A673 (cell line): ENCODE measurements at regions of chr11 and their contacts with region 1.

Region 1: GRCh38 chr11:93689240-93689639 is 27.8 kb downstream of the CEP295 start:
- DNase-seq: no peak
- H3K4me3 ChIP-seq: no peak overlapping the region
- H3K27ac ChIP-seq: no peak overlapping the region
- H3K4me1 ChIP-seq: no peaks in the 10 kb centered on the region
- H3K27me3 ChIP-seq: no peaks in the 10 kb centered on the region
- CTCF ChIP-seq: no peak

Region 2: GRCh38 chr11:93719310-93719709 is 30.1 kb after region 1 on chr11:
- CTCF ChIA-PET with region 1: no interaction called
- POLR2A ChIA-PET with region 1: interaction called, 30 read pairs
- intact Hi-C with region 1: no loop called
- DNase-seq: no peak
- H3K4me3 ChIP-seq: no peak overlapping the region
- H3K27ac ChIP-seq: no peak overlapping the region
- H3K4me1 ChIP-seq: no peaks in the 10 kb centered on the region
- H3K27me3 ChIP-seq: no peaks in the 10 kb centered on the region
- CTCF ChIP-seq: no peak

Region 3: DNA sequence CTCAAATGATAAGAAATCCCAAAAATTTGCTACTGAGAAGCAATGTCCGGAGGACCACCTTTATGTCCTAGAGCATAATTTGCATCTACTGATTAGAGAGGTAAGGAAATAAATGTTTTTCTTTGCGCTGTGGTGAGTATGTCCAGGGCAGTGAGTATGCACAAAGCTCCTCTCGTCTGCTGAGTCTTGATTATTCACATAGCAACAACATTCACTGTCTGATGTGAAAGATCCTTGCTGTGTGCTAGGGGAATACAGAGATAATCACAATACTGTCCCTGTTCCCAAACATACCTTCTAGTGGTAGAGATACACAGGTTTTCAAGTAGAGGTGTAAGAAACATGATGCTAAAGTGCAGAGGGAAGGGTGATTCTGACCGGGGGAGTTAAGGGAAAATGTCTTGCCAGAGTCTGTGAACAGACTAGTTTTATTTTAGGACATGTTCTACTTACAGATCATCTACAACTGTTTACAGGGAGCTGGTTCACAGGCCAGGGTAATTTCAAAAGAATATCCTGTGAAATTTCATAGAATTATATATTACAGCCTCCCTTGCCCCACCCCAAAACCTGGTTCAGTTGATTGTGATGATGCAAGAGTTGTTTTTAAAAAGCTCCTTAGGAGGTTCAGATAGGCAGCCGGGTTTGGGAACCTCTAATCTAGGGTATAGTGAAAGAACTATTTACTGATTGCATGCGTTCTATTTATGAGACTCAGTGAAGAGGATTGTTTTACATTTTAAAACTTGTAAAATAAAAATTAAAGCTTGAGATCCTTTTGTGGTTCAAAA is 107.4 kb after region 1 on chr11:
- CTCF ChIA-PET with region 1: no interaction called
- POLR2A ChIA-PET with region 1: no interaction called
- intact Hi-C with region 1: loop called (anchors 10 kb)
- DNase-seq: no peak
- H3K4me3 ChIP-seq: no peak overlapping the region
- H3K27ac ChIP-seq: no peak overlapping the region
- H3K4me1 ChIP-seq: peaks cover 11% of the 10 kb centered on the region
- H3K27me3 ChIP-seq: no peaks in the 10 kb centered on the region
- CTCF ChIP-seq: no peak

Region 4: GRCh38 chr11:94447149-94447548 is 757.9 kb after region 1 on chr11:
- CTCF ChIA-PET with region 1: no interaction called
- POLR2A ChIA-PET with region 1: no interaction called
- intact Hi-C with region 1: no loop called
- DNase-seq: no peak
- H3K4me3 ChIP-seq: no peak overlapping the region
- H3K27ac ChIP-seq: no peak overlapping the region
- H3K4me1 ChIP-seq: no peaks in the 10 kb centered on the region
- H3K27me3 ChIP-seq: no peaks in the 10 kb centered on the region
- CTCF ChIP-seq: no peak